ENCODE measurements at regions of chr9 and their contacts with region 1.

Region 1: GRCh38 chr9:111037381-111038305 is 627 bp downstream of the LPAR1 start:
- DNase-seq: peak; percentile 53
- H3K4me3 ChIP-seq: peak overlapping the region; percentile 87
- H3K27ac ChIP-seq: peak overlapping the region; percentile 76
- H3K4me1 ChIP-seq: peaks cover 30% of the 10 kb centered on the region
- H3K27me3 ChIP-seq: no peaks in the 10 kb centered on the region
- CTCF ChIP-seq: peak; percentile 33; the same call in 1 of the 2 replicates

Region 2: DNA sequence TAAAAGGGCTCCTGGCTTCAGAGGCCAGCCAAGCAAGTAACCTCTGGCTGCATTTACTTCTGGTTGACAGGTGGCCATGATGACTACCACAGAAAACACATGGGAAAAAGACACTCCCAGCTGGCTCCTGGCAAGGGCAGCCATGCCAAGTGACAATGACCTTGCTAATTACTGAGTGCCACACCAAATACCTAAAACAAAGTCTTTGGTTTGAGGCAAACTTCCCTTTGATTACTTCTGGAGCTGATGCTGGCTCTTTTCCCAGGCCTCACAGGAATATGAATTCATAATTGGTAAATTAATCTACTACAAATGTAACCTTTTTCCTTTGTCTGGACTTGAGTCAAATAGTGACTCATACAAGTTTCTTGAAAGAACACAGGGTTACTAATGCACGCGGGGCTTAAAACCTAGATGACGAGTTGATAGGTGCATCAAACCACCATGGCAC is 60.4 kb before region 1 on chr9:
- CTCF ChIA-PET with region 1: interaction called, 4 read pairs
- POLR2A ChIA-PET with region 1: no interaction called
- intact Hi-C with region 1: loop called (anchors 2 kb)
- DNase-seq: peak; percentile 75
- H3K4me3 ChIP-seq: no peak overlapping the region
- H3K27ac ChIP-seq: peak overlapping the region; percentile 90
- H3K4me1 ChIP-seq: peaks cover 71% of the 10 kb centered on the region
- H3K27me3 ChIP-seq: no peaks in the 10 kb centered on the region
- CTCF ChIP-seq: no peak

Region 3: GRCh38 chr9:111149016-111149759 is 111.5 kb after region 1 on chr9:
- CTCF ChIA-PET with region 1: no interaction called
- POLR2A ChIA-PET with region 1: no interaction called
- intact Hi-C with region 1: loop called (anchors 5 kb)
- DNase-seq: peak; percentile 15
- H3K4me3 ChIP-seq: no peak overlapping the region
- H3K27ac ChIP-seq: no peak overlapping the region
- H3K4me1 ChIP-seq: peaks cover 8% of the 10 kb centered on the region
- H3K27me3 ChIP-seq: no peaks in the 10 kb centered on the region
- CTCF ChIP-seq: peak; percentile 40

Region 4: DNA sequence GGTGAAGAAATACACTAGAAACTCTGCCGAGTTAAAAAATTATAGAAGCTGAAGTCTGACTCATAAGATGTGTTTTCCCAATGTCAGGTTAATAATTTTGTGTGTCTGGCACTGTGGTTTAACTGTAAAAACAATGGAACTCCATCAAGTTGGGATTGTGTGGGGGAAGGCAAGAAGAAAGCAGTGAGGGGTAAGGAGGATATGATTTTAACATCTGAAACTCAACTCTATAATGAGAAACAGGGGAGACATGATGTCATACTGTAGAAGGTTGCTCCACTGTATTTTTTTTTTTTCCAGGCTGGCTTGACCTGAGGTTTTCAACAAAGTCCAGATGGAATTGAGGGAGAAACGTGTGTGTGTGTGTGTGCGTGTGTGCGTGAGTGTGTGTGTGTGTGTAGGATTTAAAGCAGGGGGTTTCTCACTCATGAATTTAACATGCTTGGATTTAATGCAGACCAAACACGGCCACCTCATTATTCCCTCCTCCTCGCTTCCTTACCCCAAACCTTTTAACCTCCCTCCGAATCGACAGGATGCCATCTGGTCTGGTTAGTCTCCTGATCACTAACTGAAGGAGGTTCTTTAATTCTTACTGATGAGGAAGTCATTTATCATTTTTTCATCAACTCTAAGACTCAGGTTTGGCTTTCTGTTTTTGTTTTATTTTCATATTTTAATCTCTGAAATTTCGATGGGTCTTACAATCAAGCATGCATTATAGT is 140.8 kb after region 1 on chr9:
- CTCF ChIA-PET with region 1: no interaction called
- POLR2A ChIA-PET with region 1: no interaction called
- intact Hi-C with region 1: no loop called
- DNase-seq: no peak
- H3K4me3 ChIP-seq: no peak overlapping the region
- H3K27ac ChIP-seq: no peak overlapping the region
- H3K4me1 ChIP-seq: no peaks in the 10 kb centered on the region
- H3K27me3 ChIP-seq: no peaks in the 10 kb centered on the region
- CTCF ChIP-seq: no peak

Region 5: DNA sequence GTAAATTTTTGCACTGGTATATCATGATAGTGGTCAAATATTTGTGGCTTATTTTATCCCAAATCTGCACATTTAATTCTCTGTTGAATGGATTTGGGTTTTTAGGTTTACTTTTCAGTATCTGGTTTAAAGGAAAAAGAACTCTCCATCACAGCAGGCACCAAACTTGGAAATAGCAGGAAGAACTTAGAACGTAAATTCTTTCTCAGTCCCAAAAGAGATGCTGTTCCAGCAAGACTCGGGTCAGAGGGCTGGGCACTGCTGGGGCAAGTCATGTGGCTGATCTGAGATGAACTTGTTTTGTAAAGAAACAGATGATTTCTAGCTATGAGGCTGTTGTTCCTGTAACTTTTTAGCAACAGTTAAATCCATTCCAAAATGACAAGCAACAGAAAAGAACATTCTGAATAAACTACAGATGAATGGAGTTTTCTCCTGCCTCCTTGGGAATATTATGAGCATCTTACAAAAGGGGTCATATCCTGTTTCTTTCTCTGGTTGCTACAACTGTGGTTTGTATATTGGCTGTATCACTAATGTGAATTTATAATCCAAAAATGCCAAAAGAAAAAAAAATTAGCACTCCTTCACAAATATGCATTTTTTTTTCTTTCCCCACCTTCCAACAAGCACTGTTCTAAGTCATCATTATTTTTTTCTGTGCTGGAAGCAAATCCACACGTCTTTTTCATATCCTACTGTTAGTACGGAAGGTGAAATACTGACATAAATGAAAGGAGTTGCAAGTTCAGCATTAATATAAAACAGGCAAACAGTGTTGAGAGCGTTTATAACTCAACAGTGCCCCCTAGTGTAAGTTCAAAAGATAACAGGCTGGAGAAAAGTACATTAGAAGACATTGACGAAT is 261.3 kb after region 1 on chr9:
- CTCF ChIA-PET with region 1: no interaction called
- POLR2A ChIA-PET with region 1: no interaction called
- intact Hi-C with region 1: loop called (anchors 2 kb)
- DNase-seq: peak; percentile 76
- H3K4me3 ChIP-seq: peak overlapping the region; percentile 13
- H3K27ac ChIP-seq: peak overlapping the region; percentile 10
- H3K4me1 ChIP-seq: peaks cover 9% of the 10 kb centered on the region
- H3K27me3 ChIP-seq: no peaks in the 10 kb centered on the region
- CTCF ChIP-seq: peak; percentile 79